Activated CD4-positive, alpha-beta memory T cell treated with anti-CD3 and anti-CD28 coated beads, Interleukin-2, amount 10 ng/mL, durations not matched to agents 7 days and 5 days (primary cell): ENCODE measurements at regions of chr4 and their contacts with region 1.

Region 1: GRCh38 chr4:165131247-165131832 is 18.7 kb upstream of the TMEM192 start:
- DNase-seq: peak; percentile 75
- H3K4me3 Mint-ChIP-seq: no peak overlapping the region
- H3K27ac Mint-ChIP-seq: no peak overlapping the region
- H3K4me1 Mint-ChIP-seq: peaks cover 7% of the 10 kb centered on the region
- H3K27me3 Mint-ChIP-seq: peaks cover 27% of the 10 kb centered on the region

Region 2: GRCh38 chr4:165327211-165328100 is 196.1 kb after region 1 on chr4 and contains the start of gene MSMO1:
- CTCF ChIA-PET with region 1: interaction called, 13 read pairs
- POLR2A ChIA-PET with region 1: no interaction called
- DNase-seq: peak; percentile 99
- H3K4me3 Mint-ChIP-seq: no peak within 1 kb of the TSS
- H3K27ac Mint-ChIP-seq: no peak within 1 kb of the TSS
- H3K4me1 Mint-ChIP-seq: peaks cover 26% of the 10 kb centered on the region
- H3K27me3 Mint-ChIP-seq: no peaks in the 10 kb centered on the region
- total RNA-seq, gene MSMO1: 95.1 to 101 TPM

Region 3: DNA sequence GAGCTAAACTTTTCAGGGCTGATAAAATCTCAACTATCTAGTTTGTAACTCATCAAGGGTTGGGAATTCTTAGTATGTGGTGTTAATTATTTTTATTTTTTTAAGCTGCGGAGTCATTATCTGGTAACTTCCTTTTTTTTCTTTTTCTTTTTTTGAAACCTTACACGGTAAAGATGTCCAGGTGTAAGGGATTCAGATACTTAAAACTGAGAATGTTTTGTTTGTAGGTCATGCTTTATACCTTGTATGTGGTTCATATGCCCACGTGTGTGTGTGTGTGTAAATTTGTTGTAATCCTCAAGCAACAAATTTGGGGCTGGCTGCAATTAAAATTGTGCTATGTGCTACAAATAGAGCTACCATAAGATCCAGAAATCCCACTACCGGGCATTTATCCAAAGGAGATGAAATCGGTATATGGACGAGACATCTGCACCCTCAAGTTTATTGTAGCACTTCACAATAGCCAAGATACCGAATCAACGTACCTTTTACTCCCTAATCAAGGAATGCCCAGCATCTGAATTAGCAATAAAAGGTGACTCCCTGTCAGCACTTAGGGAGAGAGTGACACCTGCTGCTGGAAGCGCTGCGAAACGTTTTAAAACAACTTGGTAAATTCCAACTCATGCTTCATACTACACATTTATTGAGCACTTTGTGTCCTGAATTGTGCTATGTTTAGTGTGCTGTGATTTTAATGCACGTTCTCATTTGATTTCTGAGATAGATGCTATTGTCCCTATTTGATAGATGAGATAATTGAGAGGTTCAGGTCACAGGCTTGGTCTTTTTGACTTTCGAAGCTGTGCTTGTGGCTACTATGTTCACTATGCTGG is 212.2 kb after region 1 on chr4:
- CTCF ChIA-PET with region 1: interaction called, 51 read pairs
- POLR2A ChIA-PET with region 1: interaction called, 4 read pairs
- DNase-seq: no peak
- H3K4me3 Mint-ChIP-seq: no peak overlapping the region
- H3K27ac Mint-ChIP-seq: no peak overlapping the region
- H3K4me1 Mint-ChIP-seq: no peaks in the 10 kb centered on the region
- H3K27me3 Mint-ChIP-seq: no peaks in the 10 kb centered on the region

Region 4: DNA sequence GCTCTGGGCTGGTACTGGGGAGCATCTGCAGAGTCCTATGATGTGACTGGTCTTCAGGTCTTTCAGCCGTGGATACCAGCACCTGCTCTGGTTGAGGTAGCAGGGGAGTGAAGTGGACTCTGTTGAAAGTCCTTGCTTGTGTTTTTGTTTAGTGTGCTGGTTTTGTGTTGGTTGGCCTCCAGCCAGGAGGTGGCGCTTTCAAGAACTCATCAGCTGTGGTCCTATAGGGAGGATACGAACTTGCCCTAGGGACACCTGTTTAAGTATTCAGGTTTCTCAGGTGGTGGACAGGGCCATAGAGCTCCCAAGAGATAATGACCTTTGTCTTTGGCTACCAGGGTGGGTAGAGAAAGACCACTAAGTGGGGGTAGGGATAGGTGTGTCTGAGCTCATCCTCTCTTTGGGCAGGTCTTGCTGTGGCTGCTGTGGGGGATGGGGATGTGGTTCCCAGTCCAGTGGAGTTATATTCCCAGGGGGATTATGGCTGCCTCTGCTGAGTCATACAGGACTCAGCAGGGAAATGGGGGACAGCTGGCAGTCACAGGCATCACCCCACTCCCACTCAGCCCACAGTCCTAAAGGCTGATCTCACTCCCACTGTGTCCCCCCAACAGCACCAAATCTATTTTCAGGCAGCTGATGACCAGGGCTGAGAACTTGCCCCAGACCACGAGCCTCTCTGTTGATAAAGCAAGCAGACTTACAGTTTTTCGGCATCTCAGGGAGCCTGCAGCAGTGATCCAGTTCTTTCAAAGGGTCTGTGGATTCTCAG is 220.2 kb after region 1 on chr4:
- CTCF ChIA-PET with region 1: interaction called, 18 read pairs
- POLR2A ChIA-PET with region 1: no interaction called
- DNase-seq: no peak
- H3K4me3 Mint-ChIP-seq: no peak overlapping the region
- H3K27ac Mint-ChIP-seq: no peak overlapping the region
- H3K4me1 Mint-ChIP-seq: no peaks in the 10 kb centered on the region
- H3K27me3 Mint-ChIP-seq: peaks cover 16% of the 10 kb centered on the region

Region 5: DNA sequence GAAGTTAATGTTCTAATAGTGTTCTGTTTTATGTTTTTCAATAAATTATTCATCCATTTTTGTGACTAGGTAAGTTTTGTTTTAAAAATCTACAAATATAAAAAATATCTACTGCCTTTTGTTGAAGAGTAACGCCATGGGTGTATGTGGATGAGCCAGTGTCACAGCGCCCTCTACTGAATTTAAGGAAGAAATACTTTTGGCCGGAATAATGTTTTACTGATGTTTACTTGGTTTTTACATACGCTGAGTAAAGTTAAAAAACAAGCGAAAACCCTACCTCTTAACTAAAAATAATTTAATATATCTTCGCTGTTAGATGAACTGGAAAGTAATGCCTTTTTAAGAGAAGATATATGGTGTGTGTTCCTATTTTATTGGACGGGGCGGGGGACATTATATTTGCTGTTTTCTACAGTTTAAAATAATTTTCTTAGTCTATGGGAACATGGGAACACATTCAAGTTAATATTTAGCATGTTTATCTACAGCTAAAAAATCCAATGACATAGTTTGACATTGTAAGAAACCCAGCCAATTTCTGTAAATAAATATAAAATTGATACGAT is 333.6 kb after region 1 on chr4:
- CTCF ChIA-PET with region 1: interaction called, 45 read pairs
- POLR2A ChIA-PET with region 1: no interaction called
- DNase-seq: peak; percentile 18
- H3K4me3 Mint-ChIP-seq: no peak overlapping the region
- H3K27ac Mint-ChIP-seq: no peak overlapping the region
- H3K4me1 Mint-ChIP-seq: no peaks in the 10 kb centered on the region
- H3K27me3 Mint-ChIP-seq: no peaks in the 10 kb centered on the region